Activated CD4-positive, alpha-beta T cell treated with anti-CD3 and anti-CD28 coated beads for 36 hours (primary cell): ENCODE measurements at regions of chr7 and their contacts with region 1.

Region 1: DNA sequence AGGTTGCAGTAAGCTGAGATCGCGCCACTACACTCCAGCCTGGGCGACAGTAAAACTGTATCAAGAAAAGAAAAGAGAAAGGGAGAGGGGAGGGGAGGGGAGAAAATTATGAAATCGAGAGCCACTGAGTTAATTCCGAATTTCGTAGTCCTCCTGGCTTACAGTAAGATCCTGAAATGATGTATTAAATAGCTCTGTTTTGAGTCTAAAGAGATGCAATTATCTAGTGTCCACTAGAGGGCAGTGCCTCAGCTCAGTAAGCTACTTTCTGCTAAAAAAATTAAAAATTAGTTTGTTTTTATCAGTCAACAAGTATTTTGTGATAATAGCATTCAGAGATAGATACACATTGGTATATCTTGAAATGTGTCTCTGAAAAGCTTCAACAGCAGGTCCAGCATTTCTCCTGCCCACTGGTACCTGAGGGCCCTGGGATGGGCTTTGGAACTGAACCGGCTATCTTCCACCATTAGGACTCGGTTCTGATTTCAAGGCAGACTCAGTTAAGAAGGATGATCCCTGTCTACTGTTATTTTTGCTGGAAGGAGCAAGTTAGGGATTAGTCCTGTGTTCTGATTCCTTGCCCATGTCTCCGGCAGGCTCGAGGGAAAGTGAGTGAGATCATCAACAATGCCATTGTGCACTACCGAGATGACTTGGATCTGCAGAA is 19.5 kb downstream of the TSPAN33 start:
- DNase-seq: no peak
- ATAC-seq: peak; percentile 72
- H3K4me3 Mint-ChIP-seq: no peak overlapping the region
- H3K27ac Mint-ChIP-seq: no peak overlapping the region
- H3K4me1 Mint-ChIP-seq: peaks cover 6% of the 10 kb centered on the region
- H3K27me3 Mint-ChIP-seq: peaks cover 2% of the 10 kb centered on the region

Region 2: GRCh38 chr7:129101746-129102145 is 62.3 kb before region 1 on chr7:
- CTCF ChIA-PET with region 1: interaction called, 11 read pairs
- POLR2A ChIA-PET with region 1: no interaction called
- intact Hi-C with region 1: no loop called
- DNase-seq: no peak
- ATAC-seq: no peak
- H3K4me3 Mint-ChIP-seq: no peak overlapping the region
- H3K27ac Mint-ChIP-seq: no peak overlapping the region
- H3K4me1 Mint-ChIP-seq: no peaks in the 10 kb centered on the region
- H3K27me3 Mint-ChIP-seq: no peaks in the 10 kb centered on the region

Region 3: DNA sequence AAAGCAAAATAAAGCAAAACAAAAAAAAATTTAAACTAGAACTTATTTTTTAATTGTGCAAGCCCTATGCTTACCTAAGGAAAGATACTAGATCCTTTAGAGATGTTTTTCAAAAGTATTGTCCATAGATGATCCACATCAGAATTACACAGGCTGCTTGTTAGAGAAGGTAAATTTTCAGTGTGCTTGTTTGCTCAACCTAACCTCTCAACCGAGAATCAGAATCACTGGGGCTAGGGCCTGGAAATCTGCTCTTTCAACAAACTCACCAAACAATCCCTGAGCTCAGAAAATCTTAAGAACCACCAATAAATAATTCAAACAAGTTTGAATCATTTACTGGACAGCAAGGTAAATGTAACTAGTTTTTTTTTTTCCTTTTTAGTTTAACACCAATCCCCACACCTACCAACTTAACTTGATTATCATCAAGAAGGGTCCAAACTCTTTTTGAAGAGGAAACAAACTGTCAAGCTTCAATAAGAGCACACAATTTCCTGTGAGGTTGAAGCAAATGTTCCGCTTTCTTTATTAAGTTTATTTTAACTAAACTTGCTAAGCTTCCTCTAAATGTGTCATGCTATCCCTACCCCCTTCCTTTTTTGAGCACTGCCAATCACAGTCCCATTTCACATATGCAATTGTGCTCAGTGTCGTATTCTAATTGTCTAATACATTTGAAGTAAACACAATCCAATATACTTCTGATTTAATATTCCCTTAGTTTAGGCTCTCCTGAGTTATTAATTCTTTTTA is 26.9 kb before region 1 on chr7:
- CTCF ChIA-PET with region 1: interaction called, 11 read pairs
- POLR2A ChIA-PET with region 1: no interaction called
- intact Hi-C with region 1: no loop called
- DNase-seq: no peak
- ATAC-seq: peak; percentile 53
- H3K4me3 Mint-ChIP-seq: no peak overlapping the region
- H3K27ac Mint-ChIP-seq: peak overlapping the region; percentile 79
- H3K4me1 Mint-ChIP-seq: peaks cover 23% of the 10 kb centered on the region
- H3K27me3 Mint-ChIP-seq: no peaks in the 10 kb centered on the region

Region 4: GRCh38 chr7:129144095-129144833 is 19.7 kb before region 1 on chr7 and contains the start of gene TSPAN33:
- CTCF ChIA-PET with region 1: interaction called, 15 read pairs
- POLR2A ChIA-PET with region 1: no interaction called
- intact Hi-C with region 1: no loop called
- DNase-seq: peak; percentile 81
- ATAC-seq: peak; percentile 98
- H3K4me3 Mint-ChIP-seq: peak within 1 kb of the TSS; percentile 82
- H3K27ac Mint-ChIP-seq: no peak within 1 kb of the TSS
- H3K4me1 Mint-ChIP-seq: peaks cover 20% of the 10 kb centered on the region
- H3K27me3 Mint-ChIP-seq: peaks cover 16% of the 10 kb centered on the region
- total RNA-seq, gene TSPAN33: 6.5 to 7.5 TPM

Region 5: DNA sequence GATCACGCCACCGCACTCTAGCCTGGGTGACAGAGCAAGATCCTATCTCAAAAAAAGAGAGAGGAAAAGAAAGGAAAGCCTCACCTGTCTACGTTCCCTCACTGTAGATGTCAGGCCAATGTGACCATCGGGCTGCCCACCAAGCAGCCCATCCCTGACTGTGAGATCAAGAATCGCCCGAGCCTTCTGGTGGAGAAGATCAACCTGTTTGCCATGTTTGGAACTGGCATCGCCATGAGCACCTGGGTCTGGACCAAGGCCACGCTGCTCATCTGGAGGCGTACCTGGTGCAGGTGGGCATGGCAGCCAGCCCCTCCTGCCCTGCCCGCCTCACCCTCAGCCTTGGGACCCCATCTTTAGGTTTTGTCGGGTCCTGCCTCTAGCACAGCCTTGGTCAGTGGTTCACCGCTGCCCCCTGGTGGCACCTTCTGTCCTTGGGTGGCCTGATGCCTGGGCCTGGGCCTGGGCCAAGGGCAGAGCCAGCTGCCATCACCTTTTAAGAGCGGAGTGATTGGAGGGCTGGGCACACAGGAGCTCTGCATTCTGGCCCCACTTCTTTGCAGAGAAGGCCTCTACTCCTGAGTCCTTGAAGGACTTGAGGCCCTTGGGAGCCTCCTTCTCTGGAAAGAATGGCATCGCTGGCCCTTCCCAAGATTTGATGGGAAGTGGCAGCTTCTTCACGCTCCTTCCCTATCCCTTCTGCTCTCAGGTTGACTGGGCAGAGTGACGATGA is 46.4 kb after region 1 on chr7:
- CTCF ChIA-PET with region 1: interaction called, 58 read pairs
- POLR2A ChIA-PET with region 1: no interaction called
- intact Hi-C with region 1: loop called (anchors 1 kb)
- DNase-seq: peak; percentile 87
- ATAC-seq: peak; percentile 92
- H3K4me3 Mint-ChIP-seq: no peak overlapping the region
- H3K27ac Mint-ChIP-seq: no peak overlapping the region
- H3K4me1 Mint-ChIP-seq: no peaks in the 10 kb centered on the region
- H3K27me3 Mint-ChIP-seq: no peaks in the 10 kb centered on the region

Region 6: GRCh38 chr7:129271500-129272355 is 107.7 kb after region 1 on chr7:
- CTCF ChIA-PET with region 1: interaction called, 8 read pairs
- POLR2A ChIA-PET with region 1: no interaction called
- intact Hi-C with region 1: loop called (anchors 2 to 5 kb)
- DNase-seq: peak; percentile 76
- ATAC-seq: peak; percentile 97
- H3K4me3 Mint-ChIP-seq: no peak overlapping the region
- H3K27ac Mint-ChIP-seq: peak overlapping the region; percentile 53
- H3K4me1 Mint-ChIP-seq: peaks cover 6% of the 10 kb centered on the region
- H3K27me3 Mint-ChIP-seq: no peaks in the 10 kb centered on the region